ENCODE measurements at regions of chr17 and their contacts with region 1.

Region 1: DNA sequence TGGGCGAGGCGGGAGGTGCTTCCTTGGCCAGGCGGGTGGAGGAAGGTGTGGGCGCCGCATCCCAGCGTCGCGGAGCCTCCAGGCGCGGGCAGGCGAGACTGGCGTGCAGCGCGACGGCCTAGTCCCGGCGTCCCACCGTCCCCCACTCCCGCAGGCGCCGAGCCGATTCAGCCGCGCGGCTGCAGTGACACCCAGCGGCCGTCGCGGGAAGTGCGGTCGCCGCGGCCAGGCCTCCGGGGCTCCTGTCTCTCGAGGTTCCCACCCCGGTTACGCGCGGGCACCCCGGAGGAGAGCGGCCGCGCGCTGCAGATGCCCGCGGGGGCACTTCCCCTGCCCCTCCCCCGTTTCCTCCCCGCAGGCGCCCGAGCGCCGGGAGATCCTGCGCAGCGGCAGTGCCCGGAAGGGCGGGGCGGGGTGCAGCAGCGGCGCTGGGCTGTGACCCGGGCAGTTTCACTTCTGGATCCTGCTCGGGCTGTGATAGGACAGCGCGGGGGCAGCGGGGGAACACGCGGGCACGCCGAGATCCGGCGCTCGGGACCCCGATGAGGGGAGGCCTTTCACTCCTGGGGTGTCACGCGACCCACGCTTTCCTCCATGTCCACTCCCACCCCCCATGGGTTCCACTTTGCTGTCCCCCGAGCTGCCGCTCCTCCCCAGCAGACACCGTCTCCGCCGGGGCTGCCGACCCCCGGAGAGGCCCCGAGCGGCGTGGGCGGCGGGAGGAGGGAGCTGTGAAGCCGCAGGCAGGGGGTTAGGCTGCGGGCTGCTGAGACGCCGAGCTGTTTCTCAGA is 16.6 kb downstream of the GRB7 start:
- DNase-seq: peak; percentile 96 to 99 (median 99)
- H3K4me3 ChIP-seq: peak overlapping the region; percentile 36 to 67
- H3K4me3 Mint-ChIP-seq: peak overlapping the region; percentile 67 to 97 (median 81)
- H3K27ac ChIP-seq: peak overlapping the region; percentile 90
- H3K27ac Mint-ChIP-seq: peak overlapping the region; percentile 96 to 100 (median 98)
- H3K4me1 ChIP-seq: peaks cover 57% of the 10 kb centered on the region
- H3K4me1 Mint-ChIP-seq: peaks cover 44 to 61% (median 53%) of the 10 kb centered on the region in 4 donors
- H3K27me3 ChIP-seq: no peaks in the 10 kb centered on the region
- H3K27me3 Mint-ChIP-seq: no peaks in the 10 kb centered on the region

Region 2: GRCh38 chr17:39461113-39461925 is 293.0 kb before region 1 on chr17 and contains the start of gene CDK12:
- CTCF ChIA-PET with region 1: no interaction called
- POLR2A ChIA-PET with region 1: no interaction called
- intact Hi-C with region 1: loop called (anchors 1 kb)
- DNase-seq: peak; percentile 95 to 98 (median 96)
- H3K4me3 ChIP-seq: peak within 1 kb of the TSS; percentile 67 to 96
- H3K4me3 Mint-ChIP-seq: peak within 1 kb of the TSS; percentile 92 to 98 (median 96)
- H3K27ac ChIP-seq: peak within 1 kb of the TSS; percentile 93
- H3K27ac Mint-ChIP-seq: peak within 1 kb of the TSS; percentile 91 to 99 (median 97)
- H3K4me1 ChIP-seq: peaks cover 40% of the 10 kb centered on the region
- H3K4me1 Mint-ChIP-seq: peaks cover 14 to 57% (median 34%) of the 10 kb centered on the region in 4 donors
- H3K27me3 ChIP-seq: no peaks in the 10 kb centered on the region
- H3K27me3 Mint-ChIP-seq: no peaks in the 10 kb centered on the region
- total RNA-seq, gene CDK12: 107 to 114 TPM

Region 3: DNA sequence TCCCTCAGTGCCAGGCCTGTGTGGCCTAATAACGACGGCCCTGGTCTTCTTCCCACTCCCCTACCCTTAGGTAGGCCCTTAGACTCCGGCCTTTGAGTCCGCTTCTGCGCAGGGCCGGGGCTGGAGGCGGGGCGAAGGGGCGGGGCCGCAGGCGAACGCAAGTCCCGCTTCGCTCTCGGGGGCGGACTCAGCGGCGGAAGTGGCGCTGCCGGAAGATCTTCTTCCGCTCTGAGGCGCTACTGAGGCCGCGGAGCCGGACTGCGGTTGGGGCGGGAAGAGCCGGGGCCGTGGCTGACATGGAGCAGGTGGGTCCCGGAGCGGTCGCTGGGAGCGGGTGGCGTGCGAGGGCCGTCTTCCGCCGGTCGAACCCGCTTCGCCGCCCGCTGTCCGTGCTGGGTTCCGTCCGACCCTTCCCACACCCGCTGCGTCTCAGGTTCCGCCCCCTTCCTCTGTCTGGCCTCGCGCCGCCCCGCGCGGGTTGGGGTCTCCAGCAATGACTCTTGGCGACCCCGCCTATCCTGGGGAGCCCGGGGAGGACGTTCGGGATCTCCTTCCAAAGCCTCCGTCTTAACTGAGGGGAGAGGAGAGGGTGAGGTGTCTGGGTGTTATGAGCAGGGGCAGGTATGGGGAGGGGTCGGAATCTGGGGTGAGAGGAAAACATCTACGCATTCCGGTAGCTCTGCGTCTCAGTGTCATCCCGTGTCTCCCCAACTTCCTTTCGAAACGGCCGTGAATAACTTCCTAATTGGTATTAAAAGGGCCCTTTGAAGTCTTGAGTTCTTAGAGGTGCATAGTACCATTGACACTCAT is 117.2 kb before region 1 on chr17 and contains the start of gene STARD3:
- CTCF ChIA-PET with region 1: interaction called, 5 read pairs
- POLR2A ChIA-PET with region 1: interaction called, 4 read pairs
- intact Hi-C with region 1: loop called (anchors 1 kb)
- DNase-seq: peak; percentile 85 to 92 (median 87)
- H3K4me3 ChIP-seq: peak within 1 kb of the TSS; percentile 86 to 88
- H3K4me3 Mint-ChIP-seq: peak within 1 kb of the TSS; percentile 92 to 98 (median 96)
- H3K27ac ChIP-seq: peak within 1 kb of the TSS; percentile 97
- H3K27ac Mint-ChIP-seq: peak within 1 kb of the TSS; percentile 84 to 98 (median 96)
- H3K4me1 ChIP-seq: peaks cover 61% of the 10 kb centered on the region
- H3K4me1 Mint-ChIP-seq: peaks cover 33 to 62% (median 49%) of the 10 kb centered on the region in 4 donors
- H3K27me3 ChIP-seq: no peaks in the 10 kb centered on the region
- H3K27me3 Mint-ChIP-seq: peaks cover 0 to 1% of the 10 kb centered on the region in 2 donors
- total RNA-seq, gene STARD3: 105 to 110 TPM

Region 4: GRCh38 chr17:39719563-39720355 is 34.6 kb before region 1 on chr17:
- CTCF ChIA-PET with region 1: no interaction called
- POLR2A ChIA-PET with region 1: no interaction called
- intact Hi-C with region 1: no loop called
- DNase-seq: no peak
- H3K4me3 ChIP-seq: no peak overlapping the region
- H3K4me3 Mint-ChIP-seq: no peak overlapping the region
- H3K27ac ChIP-seq: no peak overlapping the region
- H3K27ac Mint-ChIP-seq: no peak overlapping the region
- H3K4me1 ChIP-seq: no peaks in the 10 kb centered on the region
- H3K4me1 Mint-ChIP-seq: no peaks in the 10 kb centered on the region
- H3K27me3 ChIP-seq: no peaks in the 10 kb centered on the region
- H3K27me3 Mint-ChIP-seq: no peaks in the 10 kb centered on the region

Region 5: GRCh38 chr17:39769974-39770587 is 15.7 kb after region 1 on chr17:
- CTCF ChIA-PET with region 1: interaction called, 7 read pairs
- POLR2A ChIA-PET with region 1: interaction called, 89 read pairs
- intact Hi-C with region 1: loop called (anchors 1 kb)
- DNase-seq: peak; percentile 67 to 92 (median 72)
- H3K4me3 ChIP-seq: peak overlapping the region in 1 of 2 donors; percentile 6
- H3K4me3 Mint-ChIP-seq: peak overlapping the region; percentile 33 to 96 (median 66)
- H3K27ac ChIP-seq: peak overlapping the region; percentile 77
- H3K27ac Mint-ChIP-seq: peak overlapping the region; percentile 88 to 98 (median 95)
- H3K4me1 ChIP-seq: peaks cover 100% of the 10 kb centered on the region
- H3K4me1 Mint-ChIP-seq: peaks cover 81 to 100% (median 89%) of the 10 kb centered on the region in 4 donors
- H3K27me3 ChIP-seq: no peaks in the 10 kb centered on the region
- H3K27me3 Mint-ChIP-seq: no peaks in the 10 kb centered on the region

Region 6: GRCh38 chr17:39800540-39800939 is 46.2 kb after region 1 on chr17:
- CTCF ChIA-PET with region 1: interaction called, 4 read pairs
- POLR2A ChIA-PET with region 1: interaction called, 72 read pairs
- intact Hi-C with region 1: no loop called
- DNase-seq: peak; percentile 67 to 83 (median 71)
- H3K4me3 ChIP-seq: peak overlapping the region in 1 of 2 donors; percentile 12
- H3K4me3 Mint-ChIP-seq: peak overlapping the region in 7 of 8 donors; percentile 13 to 81 (median 63)
- H3K27ac ChIP-seq: peak overlapping the region; percentile 50
- H3K27ac Mint-ChIP-seq: peak overlapping the region; percentile 79 to 96 (median 91)
- H3K4me1 ChIP-seq: peaks cover 43% of the 10 kb centered on the region
- H3K4me1 Mint-ChIP-seq: peaks cover 42 to 63% (median 52%) of the 10 kb centered on the region in 4 donors
- H3K27me3 ChIP-seq: no peaks in the 10 kb centered on the region
- H3K27me3 Mint-ChIP-seq: no peaks in the 10 kb centered on the region

Region 7: GRCh38 chr17:39863918-39864746 is 109.8 kb after region 1 on chr17 and contains the start of gene IKZF3:
- CTCF ChIA-PET with region 1: interaction called, 15 read pairs
- POLR2A ChIA-PET with region 1: interaction called, 99 read pairs
- intact Hi-C with region 1: loop called (anchors 1 kb)
- DNase-seq: peak; percentile 82 to 90 (median 83)
- H3K4me3 ChIP-seq: peak within 1 kb of the TSS; percentile 55 to 80
- H3K4me3 Mint-ChIP-seq: peak within 1 kb of the TSS; percentile 91 to 97 (median 94)
- H3K27ac ChIP-seq: peak within 1 kb of the TSS; percentile 93
- H3K27ac Mint-ChIP-seq: peak within 1 kb of the TSS; percentile 94 to 99 (median 96)
- H3K4me1 ChIP-seq: peaks cover 68% of the 10 kb centered on the region
- H3K4me1 Mint-ChIP-seq: peaks cover 52 to 93% (median 67%) of the 10 kb centered on the region in 4 donors
- H3K27me3 ChIP-seq: no peaks in the 10 kb centered on the region
- H3K27me3 Mint-ChIP-seq: no peaks in the 10 kb centered on the region
- total RNA-seq, gene IKZF3: 116 to 118 TPM

Region 8: GRCh38 chr17:39980351-39981206 is 226.2 kb after region 1 on chr17 and contains the start of gene PSMD3:
- CTCF ChIA-PET with region 1: interaction called, 3 read pairs
- POLR2A ChIA-PET with region 1: interaction called, 10 read pairs
- intact Hi-C with region 1: loop called (anchors 2 kb)
- DNase-seq: peak; percentile 96 to 99 (median 99)
- H3K4me3 ChIP-seq: peak within 1 kb of the TSS; percentile 79 to 90
- H3K4me3 Mint-ChIP-seq: peak within 1 kb of the TSS; percentile 91 to 98 (median 95)
- H3K27ac ChIP-seq: peak within 1 kb of the TSS; percentile 96
- H3K27ac Mint-ChIP-seq: peak within 1 kb of the TSS; percentile 94 to 98 (median 97)
- H3K4me1 ChIP-seq: peaks cover 34% of the 10 kb centered on the region
- H3K4me1 Mint-ChIP-seq: peaks cover 22 to 45% (median 32%) of the 10 kb centered on the region in 4 donors
- H3K27me3 ChIP-seq: no peaks in the 10 kb centered on the region
- H3K27me3 Mint-ChIP-seq: no peaks in the 10 kb centered on the region
- total RNA-seq, gene PSMD3: 59.7 to 60.3 TPM